H1 (cell line): ENCODE measurements at regions of chr17 and their contacts with region 1.

Region 1: DNA sequence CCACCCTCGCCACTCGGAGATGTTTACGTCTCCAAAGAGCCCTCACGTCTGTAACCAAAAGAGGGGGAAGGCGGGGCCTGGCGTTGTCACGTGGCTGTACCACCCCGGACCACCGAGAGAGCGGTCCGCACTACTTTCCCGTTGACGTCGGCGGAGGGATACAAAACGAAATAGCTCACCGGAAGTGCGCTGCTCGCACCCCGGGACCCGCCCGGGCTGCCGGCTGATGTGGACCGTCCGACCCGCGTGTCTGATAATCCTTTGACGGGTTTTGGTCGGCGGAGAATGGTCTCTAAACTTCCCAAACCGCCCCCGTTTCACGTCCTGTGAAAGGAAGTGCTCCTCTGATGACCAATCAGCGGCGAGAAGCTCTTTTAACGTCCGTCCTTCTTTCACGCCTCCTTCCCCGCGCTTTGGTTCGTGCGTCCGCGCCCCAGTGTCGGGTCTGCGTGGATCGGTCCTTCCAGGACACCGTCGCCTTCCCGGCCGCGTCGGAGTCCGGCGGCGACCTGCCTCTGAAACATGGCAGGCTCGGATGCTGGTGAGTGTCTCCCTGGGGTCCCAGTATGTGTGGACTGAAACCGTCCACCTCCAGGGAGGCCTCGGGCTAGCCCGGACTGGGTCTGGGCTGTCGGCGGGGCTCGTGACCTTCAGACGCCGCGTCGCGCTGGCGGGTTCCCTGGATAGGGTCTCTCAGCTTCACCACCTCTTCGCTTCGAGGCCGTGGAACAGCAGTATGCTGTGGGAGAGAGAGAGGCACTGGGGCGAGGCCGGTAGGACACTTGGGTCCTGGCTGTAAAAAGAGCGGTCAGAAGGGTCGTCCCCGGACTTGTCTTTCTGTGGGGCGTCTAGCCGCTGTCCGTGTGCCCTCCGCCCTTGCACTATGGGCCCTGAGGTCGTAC is at the start of gene CEP95:
- DNase-seq: peak in 1 of 2 experiments; percentile 95
- H3K4me3 ChIP-seq: peak within 1 kb of the TSS; percentile 95 to 99 (median 98)
- H3K27ac ChIP-seq: peak within 1 kb of the TSS; percentile 99
- H3K4me1 ChIP-seq: peaks cover 0 to 11% (median 2%) of the 10 kb centered on the region in 4 experiments; a peak in 5 of 7 replicates
- H3K27me3 ChIP-seq: no peaks in the 10 kb centered on the region
- CTCF ChIP-seq: no peak; a peak in 1 of 4 replicates
- EP300 ChIP-seq: peak; percentile 34 to 85
- POLR2A ChIP-seq: no peak; a peak in 2 of 3 replicates
- RAD21 ChIP-seq: peak in 1 of 2 experiments; percentile 2; a peak in 1 of 4 replicates
- total RNA-seq, gene CEP95: 50.8 and 51.5 TPM in 2 replicates

Region 2: GRCh38 chr17:64336760-64337455 is 169.9 kb before region 1 on chr17:
- CTCF ChIA-PET with region 1: no interaction called
- POLR2A ChIA-PET with region 1: no interaction called
- DNase-seq: peak; percentile 7 to 49
- H3K4me3 ChIP-seq: no peak overlapping the region
- H3K27ac ChIP-seq: no peak overlapping the region
- H3K4me1 ChIP-seq: 0 out of 7 replicates have a peak, but pooled peaks cover 0 to 1% (median 0%) of the 10 kb centered on the region in 4 experiments
- H3K27me3 ChIP-seq: peaks cover 0 to 13% (median 7%) of the 10 kb centered on the region in 4 experiments; a peak in 5 of 7 replicates
- CTCF ChIP-seq: no peak
- EP300 ChIP-seq: 0 out of 3 replicates have a peak, but pooled peaks of 1 of the 2 experiments have one; percentile 46
- POLR2A ChIP-seq: no peak
- RAD21 ChIP-seq: no peak

Region 3: GRCh38 chr17:64491034-64491859 is 15.6 kb before region 1 on chr17:
- CTCF ChIA-PET with region 1: interaction called, 13 read pairs
- POLR2A ChIA-PET with region 1: interaction called, 320 read pairs
- DNase-seq: no peak
- H3K4me3 ChIP-seq: no peak overlapping the region
- H3K27ac ChIP-seq: no peak overlapping the region
- H3K4me1 ChIP-seq: peaks cover 0 to 3% (median 0%) of the 10 kb centered on the region in 4 experiments; a peak in 1 of 7 replicates
- H3K27me3 ChIP-seq: no peaks in the 10 kb centered on the region
- CTCF ChIP-seq: peak; percentile 54 to 64 (median 60)
- EP300 ChIP-seq: no peak
- POLR2A ChIP-seq: no peak
- RAD21 ChIP-seq: peak; percentile 63 to 68

Region 4: DNA sequence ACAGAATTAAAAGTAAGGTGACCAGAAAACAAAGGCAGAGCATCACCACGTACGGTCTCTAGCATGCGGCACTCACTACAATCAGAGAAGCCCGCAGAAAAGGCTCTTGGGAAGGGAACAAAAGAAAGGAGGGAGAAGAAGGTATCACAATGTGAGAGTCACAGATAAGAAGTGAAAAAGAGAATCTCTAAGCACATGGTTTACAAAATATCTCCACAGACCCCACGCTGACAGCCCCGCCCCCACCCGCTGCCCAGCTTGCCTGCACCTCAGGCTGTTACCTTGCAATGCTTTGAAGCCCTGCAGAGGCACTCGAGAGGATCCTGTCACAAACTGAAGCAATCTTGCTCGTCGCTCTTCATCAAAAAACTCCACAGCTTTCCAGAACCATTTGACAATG is 40.5 kb after region 1 on chr17:
- CTCF ChIA-PET with region 1: no interaction called
- POLR2A ChIA-PET with region 1: interaction called, 75 read pairs
- DNase-seq: no peak
- H3K4me3 ChIP-seq: no peak overlapping the region
- H3K27ac ChIP-seq: no peak overlapping the region
- H3K4me1 ChIP-seq: peaks cover 0 to 4% (median 0%) of the 10 kb centered on the region in 4 experiments; a peak in 2 of 7 replicates
- H3K27me3 ChIP-seq: no peaks in the 10 kb centered on the region
- CTCF ChIP-seq: peak in 2 of 3 experiments; percentile 18 to 25; a peak in 2 of 4 replicates
- EP300 ChIP-seq: no peak
- POLR2A ChIP-seq: no peak
- RAD21 ChIP-seq: no peak

Region 5: DNA sequence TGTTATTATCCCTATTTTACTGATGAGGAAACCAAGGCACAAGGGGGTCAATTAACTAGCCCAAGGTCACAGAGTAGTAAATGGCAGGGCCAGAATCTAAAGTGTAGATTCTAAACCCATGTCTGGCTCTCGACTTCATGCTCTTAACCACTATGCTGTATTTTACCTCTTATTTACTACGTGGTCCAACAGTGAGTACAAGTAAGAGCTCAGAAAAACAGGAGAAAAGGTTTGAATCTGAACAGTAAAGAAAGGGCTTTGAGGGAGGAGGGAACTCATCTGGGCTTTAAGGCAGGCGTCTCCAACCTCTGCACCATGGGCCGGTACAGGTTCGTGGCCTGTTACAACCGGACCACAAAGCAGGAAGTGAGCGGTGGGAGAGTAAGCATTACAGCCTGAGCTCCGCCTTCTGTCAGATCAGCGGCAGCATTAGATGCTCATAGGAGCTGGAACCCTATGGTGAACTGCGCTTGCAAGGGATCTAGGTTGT is 92.4 kb after region 1 on chr17:
- CTCF ChIA-PET with region 1: no interaction called
- POLR2A ChIA-PET with region 1: interaction called, 13 read pairs
- DNase-seq: no peak
- H3K4me3 ChIP-seq: no peak overlapping the region
- H3K27ac ChIP-seq: no peak overlapping the region
- H3K4me1 ChIP-seq: no peaks in the 10 kb centered on the region
- H3K27me3 ChIP-seq: no peaks in the 10 kb centered on the region
- CTCF ChIP-seq: no peak
- EP300 ChIP-seq: no peak
- POLR2A ChIP-seq: no peak
- RAD21 ChIP-seq: no peak

Region 6: DNA sequence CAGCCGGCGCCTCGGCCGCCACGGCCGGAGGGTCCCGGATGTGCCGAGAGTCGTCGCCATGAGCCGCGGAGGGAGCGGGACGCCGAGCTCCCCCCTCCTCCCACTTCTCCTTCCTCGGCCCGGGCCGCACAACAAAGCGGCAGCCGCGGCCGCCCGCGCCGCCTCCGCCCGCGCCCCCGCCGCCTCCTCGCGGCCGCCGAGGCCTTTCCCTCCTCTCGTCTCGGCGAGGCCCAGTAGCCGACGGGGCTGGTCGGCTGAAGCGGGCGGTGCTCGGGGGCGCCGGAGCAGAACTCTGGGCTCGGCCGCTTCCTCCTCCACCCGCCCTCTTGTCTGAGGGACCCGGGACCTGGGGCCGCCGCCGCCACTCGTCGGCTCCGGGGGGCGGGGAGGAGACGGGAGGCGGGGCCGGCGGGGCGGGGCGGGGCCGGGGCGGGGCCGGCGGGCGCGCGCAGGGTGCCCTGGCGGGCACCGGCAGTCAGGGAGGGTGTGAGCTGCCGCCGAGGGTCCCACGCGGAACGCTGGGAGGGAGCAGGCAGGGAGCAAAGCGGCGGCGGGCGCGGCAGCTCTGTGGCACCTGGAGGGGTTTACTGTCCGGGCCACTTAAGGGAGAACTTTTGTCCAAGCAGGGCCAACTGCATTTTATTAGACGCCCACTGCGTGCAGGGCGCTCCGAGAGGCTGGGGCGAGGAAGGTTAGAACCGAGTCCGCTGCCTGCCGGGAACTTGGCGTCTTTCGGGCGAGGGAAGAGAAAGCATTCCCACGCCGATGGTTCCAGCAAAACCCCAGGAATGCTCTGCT is 155.3 kb after region 1 on chr17 and contains the start of gene SMURF2:
- CTCF ChIA-PET with region 1: no interaction called
- POLR2A ChIA-PET with region 1: interaction called, 25 read pairs
- DNase-seq: peak; percentile 17 to 83
- H3K4me3 ChIP-seq: peak within 1 kb of the TSS; percentile 78 to 84 (median 80)
- H3K27ac ChIP-seq: peak within 1 kb of the TSS; percentile 90; the same call in 1 of the 2 replicates
- H3K4me1 ChIP-seq: peaks cover 0 to 3% (median under 1%) of the 10 kb centered on the region in 4 experiments; a peak in 5 of 7 replicates
- H3K27me3 ChIP-seq: no peaks in the 10 kb centered on the region
- CTCF ChIP-seq: no peak
- EP300 ChIP-seq: no peak
- POLR2A ChIP-seq: peak; percentile 78 to 91
- RAD21 ChIP-seq: no peak
- total RNA-seq, gene SMURF2: 27.7 and 29.2 TPM in 2 replicates

Region 7: GRCh38 chr17:64736804-64737492 is 230.1 kb after region 1 on chr17:
- CTCF ChIA-PET with region 1: no interaction called
- POLR2A ChIA-PET with region 1: no interaction called
- DNase-seq: peak in 1 of 2 experiments; percentile 55
- H3K4me3 ChIP-seq: no peak overlapping the region
- H3K27ac ChIP-seq: no peak overlapping the region
- H3K4me1 ChIP-seq: peaks cover 0 to under 1% (median 0%) of the 10 kb centered on the region in 4 experiments; a peak in 1 of 7 replicates
- H3K27me3 ChIP-seq: no peaks in the 10 kb centered on the region
- CTCF ChIP-seq: peak in 2 of 3 experiments; percentile 57 to 65; a peak in 3 of 4 replicates
- EP300 ChIP-seq: no peak
- POLR2A ChIP-seq: no peak
- RAD21 ChIP-seq: peak; percentile 63 to 73